ENCODE measurements at regions of chr6 and their contacts with region 1.

Region 1: DNA sequence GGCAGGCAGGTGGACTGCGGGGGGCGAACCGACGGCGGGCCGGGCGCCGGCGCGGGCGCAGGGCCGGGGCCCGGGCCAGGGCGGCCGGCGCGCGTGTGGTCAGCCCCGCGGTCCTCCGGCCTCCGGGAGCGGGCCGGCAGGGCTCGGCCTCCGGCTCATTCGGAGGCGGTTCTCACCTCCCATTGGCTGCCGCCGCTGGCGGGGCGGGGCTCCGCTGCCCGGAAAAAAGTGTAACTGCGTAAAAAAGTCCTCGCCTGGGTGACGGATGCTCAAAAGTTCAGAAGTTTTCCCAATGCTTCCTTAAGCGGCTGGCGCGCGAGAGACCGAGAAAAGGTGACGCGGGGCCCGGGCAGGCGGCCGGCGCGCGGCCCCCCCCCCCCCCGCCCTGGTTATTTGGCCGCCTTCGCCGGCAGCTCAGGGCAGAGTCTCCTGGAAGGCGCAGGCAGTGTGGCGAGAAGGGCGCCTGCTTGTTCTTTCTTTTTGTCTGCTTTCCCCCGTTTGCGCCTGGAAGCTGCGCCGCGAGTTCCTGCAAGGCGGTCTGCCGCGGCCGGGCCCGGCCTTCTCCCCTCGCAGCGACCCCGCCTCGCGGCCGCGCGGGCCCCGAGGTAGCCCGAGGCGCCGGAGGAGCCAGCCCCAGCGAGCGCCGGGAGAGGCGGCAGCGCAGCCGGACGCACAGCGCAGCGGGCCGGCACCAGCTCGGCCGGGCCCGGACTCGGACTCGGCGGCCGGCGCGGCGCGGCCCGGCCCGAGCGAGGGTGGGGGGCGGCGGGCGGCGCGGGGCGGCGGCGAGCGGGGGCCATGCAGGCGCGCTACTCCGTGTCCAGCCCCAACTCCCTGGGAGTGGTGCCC is at the start of gene FOXC1:
- DNase-seq: peak; percentile 80
- H3K4me3 ChIP-seq: peak within 1 kb of the TSS; percentile 87
- H3K27me3 ChIP-seq: peaks cover 35% of the 10 kb centered on the region
- CTCF ChIP-seq: no peak
- polyA plus RNA-seq, gene FOXC1: 7.6 and 7.8 TPM in 2 replicates

Region 2: DNA sequence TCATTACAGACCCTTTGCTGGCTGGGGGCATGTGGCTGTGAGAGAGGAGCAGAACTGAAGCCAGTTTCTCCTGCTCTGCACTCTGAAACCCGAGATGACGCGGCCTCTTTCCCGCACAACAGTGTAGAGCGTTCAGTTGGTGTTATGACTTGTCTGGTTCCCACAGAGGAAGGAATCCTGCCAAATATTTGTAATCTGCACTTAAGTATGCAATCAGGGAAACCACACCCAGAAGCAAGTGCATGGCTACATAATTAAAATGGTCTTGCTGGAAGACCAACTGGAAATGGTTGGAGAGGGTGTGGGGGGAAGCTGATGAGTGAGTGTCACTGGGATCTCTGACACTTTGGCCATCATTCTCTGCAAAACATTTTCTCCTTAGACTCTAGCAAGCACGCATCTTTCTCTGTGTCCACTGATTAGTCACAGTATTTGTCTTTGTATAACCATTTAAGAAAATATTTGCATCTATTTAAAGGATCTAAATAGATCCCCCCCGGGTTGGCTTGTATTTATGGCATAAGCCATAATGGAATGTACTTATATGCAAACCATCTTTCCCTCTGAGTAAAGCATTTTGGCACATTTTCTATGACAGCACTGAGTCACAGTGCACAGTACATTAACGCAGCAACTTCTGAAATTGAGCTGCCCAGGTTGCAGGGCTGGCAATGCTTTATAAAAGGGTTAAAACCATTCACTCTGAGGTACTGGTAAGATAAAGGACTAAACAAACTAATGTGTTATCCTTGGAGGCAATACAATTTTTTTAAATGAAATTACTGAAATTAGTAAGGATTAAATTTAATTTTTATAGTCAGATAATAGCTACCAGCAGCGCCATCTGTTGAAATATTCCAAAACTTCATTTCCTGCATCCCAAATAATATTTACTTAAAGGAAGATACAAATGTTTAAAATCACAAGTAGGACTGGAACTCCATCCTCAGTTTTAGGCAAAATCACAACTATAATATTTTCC is 76.5 kb after region 1 on chr6:
- CTCF ChIA-PET with region 1: interaction called, 10 read pairs
- POLR2A ChIA-PET with region 1: interaction called, 3 read pairs
- DNase-seq: peak; percentile 99
- H3K4me3 ChIP-seq: no peak overlapping the region
- H3K27me3 ChIP-seq: no peaks in the 10 kb centered on the region
- CTCF ChIP-seq: peak; percentile 36; the same call in 1 of the 2 replicates

Region 3: GRCh38 chr6:1709234-1709641 is 99.4 kb after region 1 on chr6:
- CTCF ChIA-PET with region 1: no interaction called
- POLR2A ChIA-PET with region 1: no interaction called
- DNase-seq: no peak
- H3K4me3 ChIP-seq: no peak overlapping the region
- H3K27me3 ChIP-seq: no peaks in the 10 kb centered on the region
- CTCF ChIP-seq: no peak

Region 4: DNA sequence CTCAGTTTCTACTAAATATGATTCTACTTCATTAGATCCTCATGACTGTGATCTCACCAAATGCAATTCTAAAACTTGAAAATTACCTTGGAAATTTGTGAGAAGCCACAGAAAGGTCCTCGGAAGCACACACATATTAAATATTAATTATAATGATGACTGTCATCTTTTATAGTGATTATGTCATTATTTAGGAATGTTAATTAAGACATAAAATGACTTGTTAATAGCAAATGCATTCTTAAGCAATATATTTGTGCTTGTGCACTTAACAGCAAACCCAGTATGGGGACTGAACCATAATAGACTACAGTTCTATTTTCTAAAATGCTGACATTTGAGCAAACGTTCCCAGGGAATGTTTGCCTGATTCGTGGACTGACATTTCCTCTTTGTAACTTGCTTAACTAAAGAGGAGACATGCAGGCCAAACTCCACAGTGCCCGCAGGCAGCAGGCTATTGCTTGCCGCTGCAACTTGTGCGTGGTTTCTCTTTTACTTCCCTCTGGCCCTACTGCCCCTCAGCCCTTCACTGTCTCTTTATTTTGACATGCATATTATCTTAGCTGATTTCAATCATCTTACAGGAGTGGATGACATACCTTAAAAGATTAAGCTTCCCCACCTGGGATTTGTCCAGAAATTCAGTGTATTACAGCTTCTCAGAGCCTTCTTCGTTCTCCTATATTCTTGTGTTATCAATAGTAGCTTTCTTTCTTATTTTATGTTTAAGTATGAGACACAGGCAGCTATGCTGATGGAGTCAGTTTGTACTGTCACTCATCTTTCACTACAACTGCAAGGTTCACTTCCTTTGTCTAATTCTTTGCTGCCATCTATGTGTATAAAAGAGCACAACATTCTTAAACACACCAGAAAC is 494.0 kb after region 1 on chr6:
- CTCF ChIA-PET with region 1: interaction called, 22 read pairs
- POLR2A ChIA-PET with region 1: no interaction called
- DNase-seq: peak; percentile 3
- H3K4me3 ChIP-seq: no peak overlapping the region
- H3K27me3 ChIP-seq: no peaks in the 10 kb centered on the region
- CTCF ChIP-seq: peak; percentile 62

Measured in BJ (cell line).